ENCODE measurements at regions of chr2 and their contacts with region 1.

Region 1: GRCh38 chr2:168346725-168347477 is 99.5 kb upstream of the STK39 start:
- DNase-seq: peak; percentile 79
- H3K4me3 Mint-ChIP-seq: peak overlapping the region; percentile 75
- H3K27ac Mint-ChIP-seq: no peak overlapping the region
- H3K4me1 Mint-ChIP-seq: peaks cover 4% of the 10 kb centered on the region
- H3K27me3 Mint-ChIP-seq: peaks cover 3% of the 10 kb centered on the region

Region 2: GRCh38 chr2:167880415-167880814 is 466.5 kb before region 1 on chr2:
- CTCF ChIA-PET with region 1: no interaction called
- POLR2A ChIA-PET with region 1: no interaction called
- intact Hi-C with region 1: no loop called
- DNase-seq: no peak
- H3K4me3 Mint-ChIP-seq: no peak overlapping the region
- H3K27ac Mint-ChIP-seq: no peak overlapping the region
- H3K4me1 Mint-ChIP-seq: no peaks in the 10 kb centered on the region
- H3K27me3 Mint-ChIP-seq: peaks cover 2% of the 10 kb centered on the region

Region 3: DNA sequence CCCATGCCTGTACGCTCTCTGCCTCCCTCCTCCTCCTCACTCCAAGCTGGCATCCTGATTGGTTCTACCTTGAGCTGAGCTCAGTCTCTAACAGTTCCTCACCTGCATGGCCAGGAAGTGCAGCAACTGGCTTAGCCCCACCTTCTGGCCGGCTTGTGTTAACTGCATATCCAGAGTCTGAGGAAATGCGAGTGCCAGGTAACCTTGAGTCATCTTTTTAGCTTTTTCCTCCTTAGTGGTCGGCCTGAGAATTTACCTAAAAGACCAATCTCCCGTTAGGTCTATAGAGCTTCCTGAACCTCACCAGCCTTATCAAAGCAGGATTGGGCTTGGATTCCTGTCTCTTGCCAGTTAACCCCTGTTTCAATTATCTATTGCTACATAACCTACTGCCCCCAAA is 10.0 kb before region 1 on chr2:
- CTCF ChIA-PET with region 1: interaction called, 18 read pairs
- POLR2A ChIA-PET with region 1: no interaction called
- intact Hi-C with region 1: no loop called
- DNase-seq: peak; percentile 72
- H3K4me3 Mint-ChIP-seq: no peak overlapping the region
- H3K27ac Mint-ChIP-seq: no peak overlapping the region
- H3K4me1 Mint-ChIP-seq: peaks cover 8% of the 10 kb centered on the region
- H3K27me3 Mint-ChIP-seq: no peaks in the 10 kb centered on the region

Region 4: GRCh38 chr2:168614172-168615018 is 267.5 kb after region 1 on chr2:
- CTCF ChIA-PET with region 1: interaction called, 4 read pairs
- POLR2A ChIA-PET with region 1: no interaction called
- intact Hi-C with region 1: loop called (anchors 2 kb)
- DNase-seq: peak; percentile 11
- H3K4me3 Mint-ChIP-seq: no peak overlapping the region
- H3K27ac Mint-ChIP-seq: no peak overlapping the region
- H3K4me1 Mint-ChIP-seq: peaks cover 10% of the 10 kb centered on the region
- H3K27me3 Mint-ChIP-seq: no peaks in the 10 kb centered on the region

Region 5: DNA sequence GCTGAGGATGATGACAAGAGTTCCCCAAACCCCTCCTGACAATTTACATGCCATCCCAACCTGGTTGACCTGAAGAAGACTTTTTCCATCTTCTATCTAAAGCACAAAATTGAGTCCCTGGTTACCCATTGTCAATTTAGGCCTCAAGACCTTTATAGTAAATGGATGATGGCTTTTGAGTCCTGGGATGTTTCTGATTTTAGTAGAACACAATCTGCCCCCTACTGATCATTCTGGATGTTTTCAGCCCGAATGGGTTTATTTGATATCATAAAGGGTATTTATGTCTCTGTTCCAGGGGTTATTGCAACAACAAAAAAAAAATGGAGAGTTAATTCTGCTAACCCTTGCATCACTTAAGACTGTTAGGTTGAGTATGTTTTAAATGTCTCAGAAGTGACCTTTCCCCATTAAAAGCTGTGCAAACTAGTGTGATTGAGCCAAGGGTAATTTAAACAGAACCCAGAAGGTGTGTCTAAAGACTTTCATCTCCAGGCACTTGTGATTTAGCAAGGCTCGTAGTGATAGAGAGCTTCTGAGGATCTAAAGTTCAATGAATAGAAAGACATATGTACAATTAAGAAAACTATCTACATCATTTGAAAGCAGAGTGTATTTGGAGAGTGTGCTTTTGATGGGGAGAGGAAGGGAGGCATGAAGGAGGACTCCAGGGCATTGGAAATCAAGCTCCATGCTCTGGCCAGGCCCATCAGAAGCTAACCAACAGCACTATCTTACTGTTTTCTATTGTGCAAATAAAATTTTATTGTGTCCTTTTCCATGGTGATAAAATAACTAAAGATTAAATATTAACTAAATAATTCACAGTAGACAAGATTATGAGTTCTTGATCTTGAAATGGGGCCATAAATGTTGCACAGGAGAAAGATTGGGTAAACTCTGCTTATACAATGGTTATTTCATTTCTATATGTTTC is 358.9 kb after region 1 on chr2:
- CTCF ChIA-PET with region 1: interaction called, 37 read pairs
- POLR2A ChIA-PET with region 1: no interaction called
- intact Hi-C with region 1: loop called (anchors 1 kb)
- DNase-seq: no peak
- H3K4me3 Mint-ChIP-seq: no peak overlapping the region
- H3K27ac Mint-ChIP-seq: no peak overlapping the region
- H3K4me1 Mint-ChIP-seq: no peaks in the 10 kb centered on the region
- H3K27me3 Mint-ChIP-seq: no peaks in the 10 kb centered on the region

Region 6: GRCh38 chr2:168920504-168921157 is 573.7 kb after region 1 on chr2:
- CTCF ChIA-PET with region 1: interaction called, 12 read pairs
- POLR2A ChIA-PET with region 1: no interaction called
- intact Hi-C with region 1: loop called (anchors 1 kb)
- DNase-seq: no peak
- H3K4me3 Mint-ChIP-seq: no peak overlapping the region
- H3K27ac Mint-ChIP-seq: no peak overlapping the region
- H3K4me1 Mint-ChIP-seq: peaks cover 8% of the 10 kb centered on the region
- H3K27me3 Mint-ChIP-seq: peaks cover 19% of the 10 kb centered on the region